ENCODE measurements at regions of chr17 and their contacts with region 1.

Region 1: GRCh38 chr17:42019509-42020404 is at the start of gene NKIRAS2:
- DNase-seq: peak; percentile 82 to 91
- H3K4me3 ChIP-seq: peak within 1 kb of the TSS; percentile 77
- H3K27ac ChIP-seq: peak within 1 kb of the TSS; percentile 44
- H3K4me1 ChIP-seq: peaks cover 46% of the 10 kb centered on the region
- H3K27me3 ChIP-seq: no peaks in the 10 kb centered on the region
- CTCF ChIP-seq: peak; percentile 87
- total RNA-seq, gene NKIRAS2: 38.3 and 39.7 TPM in 2 replicates

Region 2: DNA sequence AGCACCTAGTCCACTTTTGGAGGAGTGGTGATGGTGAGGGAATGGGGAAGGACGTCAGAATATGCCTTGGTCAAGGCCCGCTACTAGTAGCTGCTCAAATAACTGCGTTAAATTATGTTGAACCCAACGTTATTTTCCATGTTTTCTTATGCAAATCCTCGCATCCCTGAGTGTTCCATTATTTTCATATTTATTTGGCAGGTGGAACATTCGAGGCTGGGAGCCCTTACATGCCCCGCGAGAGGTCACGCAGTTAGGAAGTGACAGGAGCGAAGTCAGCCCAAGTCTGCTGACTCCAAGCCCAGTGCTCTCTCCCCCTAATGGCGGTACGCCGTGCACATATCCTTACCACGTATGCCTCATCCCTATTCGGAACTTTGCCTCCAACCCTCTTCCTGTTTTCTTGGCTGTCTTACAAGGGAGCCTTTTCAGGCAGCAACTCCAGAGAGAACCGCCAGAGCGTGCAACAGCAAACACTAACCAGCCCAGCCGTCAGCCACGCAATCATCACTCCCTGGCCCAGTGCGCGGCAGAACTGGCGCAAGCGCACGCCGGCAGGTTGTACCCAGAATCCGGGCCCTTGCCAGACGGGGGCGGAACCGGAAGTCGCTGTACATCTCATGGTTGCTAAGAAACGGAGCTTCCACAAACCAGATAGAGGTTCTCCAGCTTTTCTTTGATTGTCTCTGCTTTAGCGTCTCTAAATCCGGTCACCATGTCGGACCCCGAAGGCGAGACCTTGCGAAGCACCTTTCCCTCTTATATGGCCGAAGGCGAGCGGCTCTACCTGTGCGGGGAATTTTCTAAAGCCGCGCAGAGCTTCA is 89.5 kb before region 1 on chr17 and contains the start of gene ODAD4:
- CTCF ChIA-PET with region 1: interaction called, 10 read pairs
- POLR2A ChIA-PET with region 1: no interaction called
- intact Hi-C with region 1: no loop called
- DNase-seq: peak; percentile 90 to 93
- H3K4me3 ChIP-seq: peak within 1 kb of the TSS; percentile 63
- H3K27ac ChIP-seq: peak within 1 kb of the TSS; percentile 44
- H3K4me1 ChIP-seq: peaks cover 27% of the 10 kb centered on the region
- H3K27me3 ChIP-seq: no peaks in the 10 kb centered on the region
- CTCF ChIP-seq: no peak; the same call in 1 of the 2 replicates
- total RNA-seq, gene ODAD4: 3.0 and 4.0 TPM in 2 replicates

Region 3: DNA sequence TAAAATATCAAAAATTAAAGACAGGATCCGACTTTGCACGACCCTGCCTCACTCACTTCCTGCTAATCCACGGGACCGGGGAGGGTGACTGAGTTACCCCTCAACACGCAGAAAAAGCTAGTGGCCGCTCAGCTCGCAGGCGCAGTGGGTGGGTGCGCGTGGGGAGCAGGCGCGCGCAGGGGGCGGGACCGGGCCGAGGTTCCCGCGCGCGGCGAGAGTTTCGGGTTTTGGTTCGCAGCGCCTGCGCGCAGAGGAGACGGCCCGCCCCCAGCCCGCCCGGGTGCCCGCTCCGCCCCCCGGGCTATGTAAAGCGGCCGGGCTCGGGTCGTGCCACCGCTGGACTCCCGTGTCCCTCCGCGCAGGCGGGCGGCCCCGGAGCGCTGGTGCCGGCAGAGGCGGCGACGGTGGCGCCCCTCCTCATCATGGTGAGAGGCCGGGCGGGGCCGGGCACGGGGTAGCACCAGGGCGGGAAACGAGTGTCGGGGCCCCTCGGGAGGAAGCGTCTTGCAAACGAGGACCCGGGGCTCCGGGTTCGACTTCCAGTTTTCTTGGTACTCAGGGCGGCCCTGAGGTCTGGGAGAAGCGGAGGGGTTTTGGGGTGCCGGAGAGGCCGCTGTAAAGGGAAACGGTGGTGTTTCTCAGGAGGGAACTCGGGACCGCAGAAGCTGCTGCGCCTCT is 53.2 kb before region 1 on chr17 and contains the start of gene CNP:
- CTCF ChIA-PET with region 1: interaction called, 7 read pairs
- POLR2A ChIA-PET with region 1: interaction called, 35 read pairs
- intact Hi-C with region 1: loop called (anchors 2 kb)
- DNase-seq: peak; percentile 69 to 90
- H3K4me3 ChIP-seq: peak within 1 kb of the TSS; percentile 78
- H3K27ac ChIP-seq: peak within 1 kb of the TSS; percentile 93
- H3K4me1 ChIP-seq: peaks cover 11% of the 10 kb centered on the region
- H3K27me3 ChIP-seq: no peaks in the 10 kb centered on the region
- CTCF ChIP-seq: no peak
- total RNA-seq, gene CNP: 60.6 and 64.7 TPM in 2 replicates

Region 4: DNA sequence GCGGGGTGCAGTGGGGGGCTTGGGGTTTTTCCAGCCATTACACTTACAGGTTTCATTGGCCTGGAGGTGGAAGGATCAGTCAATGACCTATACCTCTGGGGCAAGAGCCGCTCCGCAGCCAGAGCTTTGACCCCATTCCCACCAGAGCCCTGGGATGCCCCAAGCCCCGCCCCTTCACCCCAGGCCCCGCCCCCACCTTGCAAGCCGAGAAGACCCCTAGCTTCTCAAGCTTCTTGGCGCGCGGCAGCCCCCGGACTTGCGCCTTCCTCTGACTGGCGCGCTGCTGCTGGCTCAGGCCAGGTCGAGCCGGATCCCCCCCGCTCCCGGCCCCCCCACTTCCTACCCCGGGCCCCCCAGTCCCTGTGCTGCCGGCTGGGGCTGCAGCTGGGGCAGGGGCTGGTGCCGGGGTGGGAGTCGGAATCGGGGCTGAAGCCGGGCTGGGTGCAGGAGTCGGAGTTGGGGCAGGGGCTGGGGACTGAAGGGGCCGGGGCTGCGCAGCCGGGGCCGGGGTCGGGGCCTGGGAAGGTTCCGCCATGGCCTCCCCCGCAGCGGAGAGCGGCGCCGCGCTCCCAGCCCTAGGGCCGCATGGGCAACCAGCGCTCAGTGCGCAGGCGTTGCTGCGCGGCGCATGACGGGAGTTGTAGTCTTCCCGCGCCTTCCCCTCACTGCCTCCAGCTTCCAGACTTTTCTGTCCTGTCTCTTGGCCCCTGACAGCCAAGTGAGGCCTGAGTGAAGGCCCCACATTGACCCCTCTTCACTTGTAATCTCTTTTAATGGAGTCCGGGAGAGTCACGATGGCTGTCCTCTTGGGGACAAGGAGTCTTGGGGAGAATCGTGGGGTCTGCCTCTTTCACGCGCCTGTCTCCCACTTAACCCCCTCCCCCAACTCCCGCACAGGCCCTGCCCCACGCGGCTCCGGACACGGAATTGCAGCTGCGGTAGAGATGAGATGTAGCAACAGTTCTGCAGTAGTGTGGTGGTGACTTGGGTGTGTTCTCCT is 101.3 kb after region 1 on chr17 and contains the start of gene KAT2A:
- CTCF ChIA-PET with region 1: interaction called, 11 read pairs
- POLR2A ChIA-PET with region 1: no interaction called
- intact Hi-C with region 1: no loop called
- DNase-seq: peak; percentile 66 to 67
- H3K4me3 ChIP-seq: peak within 1 kb of the TSS; percentile 62; the same call in 1 of the 2 replicates
- H3K27ac ChIP-seq: no peak within 1 kb of the TSS
- H3K4me1 ChIP-seq: no peaks in the 10 kb centered on the region; the same call in 1 of the 2 replicates
- H3K27me3 ChIP-seq: no peaks in the 10 kb centered on the region
- CTCF ChIP-seq: no peak
- total RNA-seq, gene KAT2A: 42.1 and 47.6 TPM in 2 replicates

Region 5: GRCh38 chr17:42322382-42323267 is 302.9 kb after region 1 on chr17:
- CTCF ChIA-PET with region 1: no interaction called
- POLR2A ChIA-PET with region 1: no interaction called
- intact Hi-C with region 1: loop called (anchors 10 kb)
- DNase-seq: peak; percentile 84 to 87
- H3K4me3 ChIP-seq: no peak overlapping the region
- H3K27ac ChIP-seq: no peak overlapping the region
- H3K4me1 ChIP-seq: peaks cover 37% of the 10 kb centered on the region
- H3K27me3 ChIP-seq: no peaks in the 10 kb centered on the region
- CTCF ChIP-seq: peak; percentile 98

Region 6: DNA sequence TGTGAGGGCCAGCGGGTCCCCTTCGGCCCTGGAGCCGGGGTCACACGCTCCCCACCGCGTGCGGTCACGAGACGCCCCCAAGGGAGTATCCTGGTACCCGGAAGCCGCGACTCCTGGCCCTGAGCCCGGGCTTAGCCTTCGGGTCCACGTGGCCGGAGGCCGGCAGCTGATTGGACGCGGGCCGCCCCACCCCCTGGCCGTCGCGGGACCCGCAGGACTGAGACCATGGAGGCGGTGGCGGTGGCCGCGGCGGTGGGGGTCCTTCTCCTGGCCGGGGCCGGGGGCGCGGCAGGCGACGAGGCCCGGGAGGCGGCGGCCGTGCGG is 516.3 kb after region 1 on chr17 and contains the start of gene NAGLU:
- CTCF ChIA-PET with region 1: interaction called, 11 read pairs
- POLR2A ChIA-PET with region 1: no interaction called
- intact Hi-C with region 1: no loop called
- DNase-seq: peak; percentile 66 to 86
- H3K4me3 ChIP-seq: peak within 1 kb of the TSS; percentile 61
- H3K27ac ChIP-seq: peak within 1 kb of the TSS; percentile 36; the same call in 1 of the 2 replicates
- H3K4me1 ChIP-seq: peaks cover 23% of the 10 kb centered on the region
- H3K27me3 ChIP-seq: no peaks in the 10 kb centered on the region
- CTCF ChIP-seq: no peak
- total RNA-seq, gene NAGLU: 18.2 and 20.6 TPM in 2 replicates